Panc1 (cell line): ENCODE measurements at regions of chr11 and their contacts with region 1.

Region 1: DNA sequence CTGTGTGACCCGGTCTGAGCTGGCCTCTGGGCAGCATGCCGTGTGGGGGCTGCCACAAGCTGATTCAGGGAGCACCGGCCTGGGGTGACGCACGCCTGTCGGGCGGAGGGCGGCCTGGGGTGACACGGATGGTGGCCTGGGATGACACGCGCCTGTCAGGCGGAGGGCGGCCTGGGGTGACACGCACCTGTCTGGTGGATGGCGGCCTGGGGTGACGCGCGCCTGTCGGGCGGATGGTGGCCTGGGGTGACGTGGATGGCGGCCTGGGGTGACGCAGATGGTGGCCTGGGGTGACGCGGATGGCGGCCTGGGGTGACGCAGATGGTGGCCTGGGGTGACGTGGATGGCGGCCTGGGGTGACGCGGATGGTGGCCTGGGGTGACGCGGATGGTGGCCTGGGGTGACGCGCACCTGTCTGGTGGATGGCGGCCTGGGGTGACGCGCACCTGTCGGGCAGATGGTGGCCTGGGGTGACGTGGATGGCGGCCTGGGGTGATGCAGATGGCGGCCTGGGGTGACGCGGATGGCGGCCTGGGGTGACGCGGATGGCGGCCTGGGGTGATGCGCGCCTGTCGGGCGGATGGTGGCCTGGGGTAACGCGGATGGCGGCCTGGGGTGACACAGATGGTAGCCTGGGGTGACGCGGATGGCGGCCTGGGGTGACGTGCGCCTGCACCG is 21.5 kb downstream of the PTDSS2 start:
- DNase-seq: no peak
- ATAC-seq: no peak
- H3K4me3 ChIP-seq: no peak overlapping the region
- H3K27ac ChIP-seq: no peak overlapping the region
- H3K4me1 ChIP-seq: peaks cover 24% of the 10 kb centered on the region
- H3K27me3 ChIP-seq: no peaks in the 10 kb centered on the region
- CTCF ChIP-seq: no peak

Region 2: GRCh38 chr11:460331-461199 is 11.0 kb before region 1 on chr11:
- CTCF ChIA-PET with region 1: interaction called, 3 read pairs
- POLR2A ChIA-PET with region 1: interaction called, 20 read pairs
- in situ Hi-C with region 1: no loop called
- intact Hi-C with region 1: no loop called
- DNase-seq: no peak
- ATAC-seq: no peak
- H3K4me3 ChIP-seq: no peak overlapping the region
- H3K27ac ChIP-seq: no peak overlapping the region
- H3K4me1 ChIP-seq: peaks cover 2% of the 10 kb centered on the region
- H3K27me3 ChIP-seq: no peaks in the 10 kb centered on the region
- CTCF ChIP-seq: no peak